ENCODE measurements at regions of chr1 and their contacts with region 1.

Region 1: GRCh38 chr1:24391882-24392603 is 21.5 kb downstream of the STPG1 start:
- DNase-seq: peak in 8 of 10 donors; percentile 31 to 93 (median 66)

Region 2: GRCh38 chr1:24065304-24066050 is 326.6 kb before region 1 on chr1:
- intact Hi-C with region 1: loop called (anchors 5 kb)
- DNase-seq: peak in 1 of 10 donors; percentile 47

Region 3: GRCh38 chr1:24201941-24202440 is 190.1 kb before region 1 on chr1:
- intact Hi-C with region 1: loop called (anchors 1 kb)
- DNase-seq: peak in 9 of 10 donors; percentile 44 to 90 (median 76)

Region 4: DNA sequence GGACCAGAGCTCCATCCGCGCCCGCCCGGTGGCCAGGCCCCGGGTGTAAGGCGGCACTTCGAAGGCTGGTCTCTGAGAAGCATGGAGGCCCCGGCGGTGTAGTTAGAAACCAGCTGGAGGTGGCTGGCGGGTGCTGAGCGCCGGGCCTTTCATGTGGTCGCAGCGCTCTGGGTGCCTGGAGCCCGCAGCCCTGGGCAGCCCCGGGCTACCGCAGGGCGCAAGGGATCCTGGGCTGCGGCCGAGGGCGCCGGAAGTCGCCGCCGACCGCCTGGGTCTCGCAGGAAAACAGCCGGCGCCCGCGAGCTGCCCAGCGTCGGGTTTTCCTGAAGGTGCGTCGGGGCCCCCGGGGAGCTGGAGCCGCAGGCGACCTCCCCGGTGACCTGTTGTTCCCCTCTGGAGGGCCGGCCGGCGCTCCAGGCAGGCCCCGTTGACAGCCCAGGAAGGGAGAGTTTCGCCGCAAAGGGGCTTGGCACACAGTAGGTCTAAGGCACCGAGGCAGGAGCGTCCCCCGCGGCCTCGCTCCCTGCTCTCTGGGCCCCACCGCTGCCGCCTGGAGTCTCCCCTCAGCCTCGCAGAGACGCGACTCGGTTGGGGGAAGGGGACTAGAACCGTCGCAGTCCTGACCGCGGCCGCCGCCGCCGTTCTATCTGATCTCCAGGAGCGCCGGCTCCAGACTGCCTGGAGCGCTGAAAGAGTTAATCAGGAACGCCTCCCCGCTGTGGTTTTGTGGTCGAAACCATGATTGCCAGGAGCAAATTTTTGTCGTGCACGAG is 70.2 kb before region 1 on chr1:
- intact Hi-C with region 1: no loop called
- DNase-seq: peak in 1 of 10 donors; percentile 16

Region 5: GRCh38 chr1:24341260-24341659 is 50.8 kb before region 1 on chr1:
- intact Hi-C with region 1: no loop called
- DNase-seq: peak in 1 of 10 donors; percentile 53